Ovary (tissue), 10 donors: ENCODE measurements at regions of chr12 and their contacts with region 1.

Region 1: GRCh38 chr12:67111182-67111581 is 158.0 kb upstream of the CAND1 start:
- DNase-seq: no peak
- H3K4me3 ChIP-seq: no peak overlapping the region
- H3K27ac ChIP-seq: no peak overlapping the region
- H3K4me1 ChIP-seq: no peaks in the 10 kb centered on the region
- H3K27me3 ChIP-seq: no peaks in the 10 kb centered on the region
- CTCF ChIP-seq: no peak
- EP300 ChIP-seq: no peak
- POLR2A ChIP-seq: no peak

Region 2: DNA sequence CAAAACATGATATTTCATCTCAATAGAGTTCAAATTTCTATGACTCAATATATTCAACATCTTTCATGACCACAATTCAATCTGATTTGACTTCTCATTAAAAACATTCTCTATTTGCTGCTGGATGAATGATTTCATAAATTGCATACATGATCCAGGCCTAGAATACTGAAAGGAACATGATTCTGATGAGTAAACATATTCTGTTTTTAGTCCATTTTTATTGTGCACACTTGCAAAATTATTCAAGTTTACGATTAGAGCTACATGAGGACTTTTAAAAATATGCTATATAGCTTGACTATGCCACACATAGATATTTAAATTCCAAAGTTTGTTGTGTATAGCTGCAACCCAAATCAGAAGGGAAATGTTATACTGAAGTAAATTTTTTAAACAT is 158.5 kb before region 1 on chr12:
- intact Hi-C with region 1: loop called in 1 of 4 experiments (anchors 5 kb)
- DNase-seq: no peak
- H3K4me3 ChIP-seq: no peak overlapping the region
- H3K27ac ChIP-seq: no peak overlapping the region
- H3K4me1 ChIP-seq: no peaks in the 10 kb centered on the region
- H3K27me3 ChIP-seq: no peaks in the 10 kb centered on the region
- CTCF ChIP-seq: no peak
- EP300 ChIP-seq: no peak
- POLR2A ChIP-seq: no peak

Region 3: GRCh38 chr12:67002720-67003119 is 108.5 kb before region 1 on chr12:
- intact Hi-C with region 1: no loop called
- DNase-seq: no peak
- H3K4me3 ChIP-seq: no peak overlapping the region
- H3K27ac ChIP-seq: no peak overlapping the region
- H3K4me1 ChIP-seq: no peaks in the 10 kb centered on the region
- H3K27me3 ChIP-seq: no peaks in the 10 kb centered on the region
- CTCF ChIP-seq: no peak
- EP300 ChIP-seq: no peak
- POLR2A ChIP-seq: no peak